ENCODE measurements at regions of chr11 and their contacts with region 1.

Region 1: DNA sequence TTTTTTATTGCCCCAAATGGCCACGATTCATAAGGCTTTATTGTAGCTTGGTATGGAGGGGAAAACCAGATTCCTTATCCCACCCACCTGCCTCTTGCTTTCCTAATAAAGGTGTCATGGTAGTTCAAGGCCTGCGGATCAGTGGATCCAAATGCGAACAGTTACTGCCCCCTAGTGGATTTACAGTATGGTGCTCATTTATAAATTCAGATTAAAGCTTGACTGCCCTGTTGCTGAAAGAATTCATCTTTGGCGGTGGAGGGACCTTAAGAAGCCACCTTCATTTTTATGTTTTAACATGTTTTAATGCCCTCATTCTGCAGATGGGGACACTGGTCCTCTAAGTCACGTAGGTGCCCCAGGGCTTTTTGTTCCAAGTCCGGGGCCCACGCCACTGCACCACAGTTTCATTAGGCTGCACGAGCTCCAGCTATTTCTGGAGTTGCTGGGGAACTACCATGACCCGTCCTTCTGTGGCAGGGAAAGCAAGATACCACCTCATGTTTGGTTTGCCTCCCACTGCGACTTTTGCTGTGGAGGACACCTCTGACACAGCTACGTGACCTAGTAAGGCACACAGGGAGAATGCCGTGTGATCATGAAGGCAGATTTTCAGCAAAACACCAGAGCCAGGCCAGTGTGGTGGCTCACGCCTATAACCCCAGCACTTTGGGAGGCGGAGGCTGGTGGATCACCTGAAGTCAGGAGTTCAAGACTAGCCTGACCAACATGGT is 15.6 kb upstream of the INCENP start:
- DNase-seq: peak in 1 of 10 donors; percentile 49
- H3K4me3 ChIP-seq: no peak overlapping the region
- H3K27ac ChIP-seq: peak overlapping the region in 7 of 59 donors; percentile 4 to 47 (median 31)
- H3K27me3 ChIP-seq: no peaks in the 10 kb centered on the region
- CTCF ChIP-seq: peak; percentile 68 to 98 (median 90)

Region 2: GRCh38 chr11:61803889-61804647 is 304.1 kb before region 1 on chr11:
- intact Hi-C with region 1: loop called in 1 of 2 experiments (anchors 5 kb)
- DNase-seq: peak in 1 of 10 donors; percentile 12
- H3K4me3 ChIP-seq: no peak overlapping the region
- H3K27ac ChIP-seq: peak overlapping the region in 11 of 59 donors; percentile 9 to 56 (median 35)
- H3K27me3 ChIP-seq: no peaks in the 10 kb centered on the region
- CTCF ChIP-seq: no peak

Region 3: GRCh38 chr11:61871158-61871597 is 237.0 kb before region 1 on chr11:
- intact Hi-C with region 1: loop called in 1 of 2 experiments (anchors 1 kb)
- DNase-seq: peak; percentile 78 to 90 (median 88)
- H3K4me3 ChIP-seq: peak overlapping the region in 52 of 59 donors; percentile 5 to 56 (median 38)
- H3K27ac ChIP-seq: peak overlapping the region in 36 of 59 donors; percentile 8 to 82 (median 48)
- H3K27me3 ChIP-seq: no peaks in the 10 kb centered on the region
- CTCF ChIP-seq: peak; percentile 77 to 98 (median 94)

Region 4: DNA sequence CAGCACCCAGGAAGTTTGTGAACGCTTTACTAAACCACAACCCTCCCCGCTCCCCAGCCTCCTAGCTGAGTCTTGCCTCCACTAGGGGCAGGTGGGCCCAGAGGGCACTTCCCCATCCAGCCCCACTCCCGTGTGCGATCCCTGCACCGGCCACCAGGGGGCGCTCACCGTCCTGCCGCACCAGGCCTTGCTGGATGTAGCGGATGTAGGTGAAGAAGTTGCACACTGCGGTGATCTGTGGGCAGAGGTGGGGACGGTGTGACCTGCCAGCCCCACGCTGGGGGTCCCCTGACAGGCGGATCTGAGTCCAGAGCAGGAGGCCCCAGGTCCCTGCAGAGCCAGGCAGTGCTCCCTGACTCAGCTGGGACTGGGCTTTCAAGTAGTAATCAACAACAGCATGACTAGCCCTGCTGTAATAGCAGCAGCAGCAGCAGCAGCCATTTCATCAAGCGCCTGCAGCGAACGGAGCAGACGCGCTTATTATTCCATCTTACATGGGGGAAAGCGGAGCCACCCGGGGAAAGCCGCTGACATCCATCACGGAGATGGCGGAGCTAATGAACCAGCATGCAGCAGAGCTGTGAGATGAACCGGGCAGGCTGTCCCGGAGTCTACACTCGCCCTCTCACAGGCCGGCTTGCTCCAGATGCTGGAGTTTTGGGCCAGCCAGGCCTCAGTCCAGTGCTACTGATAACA is 208.9 kb before region 1 on chr11:
- intact Hi-C with region 1: loop called (anchors 2 kb)
- DNase-seq: peak; percentile 53 to 85 (median 72)
- H3K4me3 ChIP-seq: no peak overlapping the region
- H3K27ac ChIP-seq: peak overlapping the region in 50 of 59 donors; percentile 1 to 84 (median 56)
- H3K27me3 ChIP-seq: no peaks in the 10 kb centered on the region
- CTCF ChIP-seq: peak; percentile 99 to 100 (median 100)

Region 5: GRCh38 chr11:62123669-62124185 is 15.5 kb after region 1 on chr11 and contains the start of gene INCENP:
- intact Hi-C with region 1: loop called in 1 of 2 experiments (anchors 1 kb)
- DNase-seq: peak; percentile 92 to 98 (median 98)
- H3K4me3 ChIP-seq: peak within 1 kb of the TSS; percentile 67 to 100 (median 92)
- H3K27ac ChIP-seq: peak within 1 kb of the TSS in 52 of 59 donors; percentile 0 to 87 (median 62)
- H3K27me3 ChIP-seq: no peaks in the 10 kb centered on the region
- CTCF ChIP-seq: peak in 43 of 56 donors; percentile 7 to 65 (median 36)
- total RNA-seq, gene INCENP: 26.8 to 61.2 (median 41.1) TPM